ENCODE measurements at regions of chr16 and their contacts with region 1.

Region 1: GRCh38 chr16:18801197-18801972 is at the start of gene ARL6IP1:
- DNase-seq: peak; percentile 98
- H3K27ac ChIP-seq: peak within 1 kb of the TSS; percentile 92
- CTCF ChIP-seq: peak; percentile 94

Region 2: DNA sequence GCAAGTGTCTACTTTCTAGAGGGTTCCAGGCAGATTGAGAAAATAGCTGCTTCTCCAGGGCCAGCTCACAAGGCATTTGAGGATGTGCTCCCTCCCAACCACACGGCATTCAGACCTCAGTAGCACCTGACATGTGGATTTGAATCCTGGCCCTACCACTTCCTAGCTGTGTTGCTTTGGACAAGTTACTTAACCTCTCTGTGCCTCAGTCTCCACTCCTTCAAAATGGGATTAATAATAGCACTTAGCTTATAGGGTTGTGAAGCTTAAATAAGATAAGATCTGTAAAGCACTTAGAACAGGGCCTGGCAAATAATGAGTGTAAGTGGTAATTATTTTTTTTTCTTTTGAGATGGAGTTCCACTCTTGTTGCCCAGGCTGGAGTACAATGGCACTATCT is 218.5 kb before region 1 on chr16:
- CTCF ChIA-PET with region 1: no interaction called
- POLR2A ChIA-PET with region 1: no interaction called
- DNase-seq: no peak
- H3K27ac ChIP-seq: no peak overlapping the region
- CTCF ChIP-seq: no peak

Region 3: GRCh38 chr16:18789850-18790724 is 11.3 kb before region 1 on chr16 and contains the start of gene RPS15A:
- CTCF ChIA-PET with region 1: interaction called, 4 read pairs
- POLR2A ChIA-PET with region 1: interaction called, 23 read pairs
- DNase-seq: peak; percentile 98
- H3K27ac ChIP-seq: peak within 1 kb of the TSS; percentile 92
- CTCF ChIP-seq: no peak

Region 4: GRCh38 chr16:18811925-18812324 is 10.5 kb after region 1 on chr16:
- CTCF ChIA-PET with region 1: no interaction called
- POLR2A ChIA-PET with region 1: no interaction called
- DNase-seq: no peak
- H3K27ac ChIP-seq: no peak overlapping the region
- CTCF ChIP-seq: no peak

Region 5: GRCh38 chr16:19067349-19068236 is 266.2 kb after region 1 on chr16 and contains the start of gene COQ7:
- CTCF ChIA-PET with region 1: no interaction called
- POLR2A ChIA-PET with region 1: no interaction called
- DNase-seq: peak; percentile 99
- H3K27ac ChIP-seq: peak within 1 kb of the TSS; percentile 98
- CTCF ChIP-seq: no peak

Measured in RWPE1 (cell line).